HepG2 (cell line): ENCODE measurements at regions of chr17 and their contacts with region 1.

Region 1: GRCh38 chr17:82876602-82877379 is 37.0 kb upstream of the ZNF750 start:
- DNase-seq: peak; percentile 65
- ATAC-seq: peak; percentile 86
- H3K4me3 ChIP-seq: 0 out of 6 replicates have a peak overlapping the region, but pooled peaks of 1 of the 3 experiments have one; percentile 8
- H3K27ac ChIP-seq: peak overlapping the region; percentile 53
- H3K4me1 ChIP-seq: peaks cover 47% of the 10 kb centered on the region
- H3K27me3 ChIP-seq: no peaks in the 10 kb centered on the region
- CTCF ChIP-seq: peak; percentile 78
- EP300 ChIP-seq: no peak
- POLR2A ChIP-seq: no peak
- RAD21 ChIP-seq: peak; percentile 65; the same call in 1 of the 2 replicates

Region 2: DNA sequence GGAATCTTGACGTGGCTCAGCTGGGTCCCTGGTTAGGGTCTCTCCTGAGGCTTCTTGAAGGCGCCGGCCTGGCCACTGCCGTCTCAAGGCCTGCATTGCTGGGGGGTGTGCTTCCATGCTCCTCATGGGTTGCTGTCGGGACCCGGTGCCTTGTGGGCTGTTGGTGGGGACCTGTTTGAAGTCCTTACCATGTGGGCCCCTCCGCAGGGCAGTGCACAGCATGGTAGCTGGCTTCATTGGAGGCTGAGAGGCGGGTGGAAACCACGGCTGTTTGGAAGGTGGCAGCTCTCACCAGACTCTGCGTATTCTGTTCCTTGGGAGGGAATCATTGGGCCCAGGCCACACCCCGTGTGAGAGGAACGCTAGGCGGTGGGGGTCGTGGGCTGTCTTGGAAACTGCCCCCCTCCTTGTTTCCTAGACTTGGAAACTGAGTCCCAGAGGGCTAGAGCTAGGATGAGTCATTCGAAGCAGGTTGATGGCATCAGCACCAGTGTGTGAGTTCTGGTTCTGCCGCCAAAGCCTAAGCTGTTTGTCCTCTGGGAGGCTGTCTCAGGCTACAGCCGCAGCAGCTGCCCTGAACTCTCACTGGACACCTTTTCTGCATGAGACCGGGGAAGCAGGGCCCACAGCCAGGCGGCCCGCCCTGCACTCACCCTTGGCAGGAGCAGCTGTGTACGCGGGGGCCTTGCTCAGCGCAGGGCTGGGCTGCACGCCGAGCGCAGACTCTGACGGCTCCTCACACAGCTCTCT is 72.2 kb before region 1 on chr17:
- CTCF ChIA-PET with region 1: no interaction called
- POLR2A ChIA-PET with region 1: no interaction called
- in situ Hi-C with region 1: no loop called
- intact Hi-C with region 1: no loop called
- DNase-seq: no peak
- ATAC-seq: no peak
- H3K4me3 ChIP-seq: no peak overlapping the region
- H3K27ac ChIP-seq: no peak overlapping the region
- H3K4me1 ChIP-seq: no peaks in the 10 kb centered on the region
- H3K27me3 ChIP-seq: no peaks in the 10 kb centered on the region
- CTCF ChIP-seq: no peak
- EP300 ChIP-seq: no peak
- POLR2A ChIP-seq: no peak
- RAD21 ChIP-seq: no peak

Region 3: DNA sequence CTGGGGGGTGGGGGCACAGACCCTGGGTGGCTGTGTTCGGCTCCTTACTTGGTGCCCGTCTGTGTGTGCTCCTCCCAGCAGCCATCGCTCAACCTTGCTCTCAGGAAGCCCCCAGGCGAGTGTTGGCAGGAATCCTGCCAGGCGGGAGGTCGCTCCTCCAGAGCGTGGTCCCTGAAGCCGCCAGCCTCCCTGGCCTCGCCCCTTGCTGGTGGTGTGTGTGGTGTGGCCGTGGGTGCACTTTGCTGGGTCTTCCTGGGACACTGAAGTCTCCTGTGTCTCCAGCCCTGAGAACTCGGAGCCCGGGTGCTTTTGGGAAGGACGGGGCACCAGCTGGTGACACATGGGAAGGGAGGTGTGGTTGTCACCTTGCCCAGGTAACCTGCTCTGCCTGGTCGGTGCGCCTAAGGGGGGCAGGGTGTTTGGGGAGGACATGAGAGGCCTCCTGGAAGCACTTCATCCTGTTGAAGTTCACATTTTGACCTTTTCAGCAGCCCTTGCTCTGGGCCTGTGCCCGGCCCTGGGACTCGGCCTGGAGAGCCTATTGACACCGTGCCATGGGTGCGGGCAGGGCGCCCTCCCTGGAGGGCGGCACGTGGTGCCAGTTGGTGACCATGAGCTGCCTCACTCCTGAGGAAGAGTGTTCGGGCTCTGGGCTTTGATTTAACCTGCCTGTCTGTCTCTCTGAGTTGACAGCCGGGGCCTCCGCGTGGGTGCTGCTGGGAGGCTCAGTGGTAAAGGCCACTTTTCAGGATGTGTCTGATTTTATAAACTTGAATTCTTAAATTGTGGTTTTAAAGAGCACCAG is 12.1 kb after region 1 on chr17:
- CTCF ChIA-PET with region 1: no interaction called
- POLR2A ChIA-PET with region 1: interaction called, 11 read pairs
- in situ Hi-C with region 1: no loop called
- intact Hi-C with region 1: no loop called
- DNase-seq: peak; percentile 20
- ATAC-seq: peak; percentile 62
- H3K4me3 ChIP-seq: peak overlapping the region in 2 of 3 experiments; percentile 5 to 60; a peak in 3 of 6 replicates
- H3K27ac ChIP-seq: peak overlapping the region; percentile 89
- H3K4me1 ChIP-seq: peaks cover 49% of the 10 kb centered on the region
- H3K27me3 ChIP-seq: no peaks in the 10 kb centered on the region
- CTCF ChIP-seq: no peak
- EP300 ChIP-seq: no peak
- POLR2A ChIP-seq: no peak
- RAD21 ChIP-seq: no peak

Region 4: GRCh38 chr17:82917691-82918345 is 41.0 kb after region 1 on chr17:
- CTCF ChIA-PET with region 1: no interaction called
- POLR2A ChIA-PET with region 1: no interaction called
- in situ Hi-C with region 1: no loop called
- intact Hi-C with region 1: loop called (anchors 5 kb)
- DNase-seq: peak; percentile 23
- ATAC-seq: peak; percentile 61
- H3K4me3 ChIP-seq: no peak overlapping the region
- H3K27ac ChIP-seq: no peak overlapping the region
- H3K4me1 ChIP-seq: peaks cover 11% of the 10 kb centered on the region
- H3K27me3 ChIP-seq: no peaks in the 10 kb centered on the region
- CTCF ChIP-seq: peak; percentile 73
- EP300 ChIP-seq: no peak
- POLR2A ChIP-seq: no peak
- RAD21 ChIP-seq: peak; percentile 72